Endothelial cell of umbilical vein (primary cell): ENCODE measurements at regions of chr1 and their contacts with region 1.

Region 1: DNA sequence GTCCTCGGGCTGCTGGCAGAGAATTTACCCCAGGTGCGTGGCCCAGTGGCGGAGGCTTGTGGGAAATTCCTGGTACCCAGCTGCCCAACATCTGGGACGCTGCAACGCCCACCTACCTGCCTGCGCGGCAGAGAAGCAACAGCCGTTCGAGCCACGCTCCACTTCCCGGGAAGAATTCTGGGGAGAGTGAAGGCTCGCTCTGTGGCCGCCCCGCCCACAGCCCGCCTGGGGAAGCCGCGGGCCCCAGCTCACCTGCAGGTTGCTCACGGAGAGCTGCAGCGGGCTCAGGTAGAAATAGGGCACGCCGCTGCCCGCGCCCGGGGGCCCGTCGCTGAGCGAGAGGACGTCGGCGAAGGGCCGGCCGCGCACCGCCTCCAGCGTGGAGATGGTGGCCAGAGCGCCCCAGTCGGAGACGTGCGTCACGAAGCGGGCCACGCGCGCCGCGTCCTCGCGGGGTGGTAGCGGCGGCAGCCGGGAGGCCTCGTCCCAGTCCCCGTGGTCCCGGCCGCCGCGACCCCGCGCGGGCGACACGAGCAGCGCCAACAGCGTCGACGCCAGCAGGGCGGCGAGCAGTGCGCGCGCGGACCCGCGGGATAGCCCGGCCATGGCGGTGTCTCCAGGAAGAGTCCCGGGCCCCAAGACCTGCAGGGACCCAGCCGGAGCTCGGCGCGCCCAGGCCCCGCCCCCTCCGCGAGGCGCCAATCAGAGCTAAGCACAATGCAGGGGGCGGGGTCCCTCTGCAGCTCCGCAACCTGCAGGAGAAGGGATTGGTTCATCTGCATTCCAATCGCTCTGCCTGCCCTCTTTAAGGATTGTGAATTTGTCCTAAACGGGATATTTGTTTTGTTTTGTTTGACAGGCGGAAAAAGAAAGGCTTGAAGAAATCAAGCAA is at the start of gene CREG1:
- DNase-seq: peak; percentile 91
- H3K4me3 ChIP-seq: peak within 1 kb of the TSS; percentile 42 to 60 (median 49)
- H3K27ac ChIP-seq: no peak within 1 kb of the TSS
- H3K4me1 ChIP-seq: peaks cover 5% of the 10 kb centered on the region
- H3K27me3 ChIP-seq: peaks cover 0 to 2% of the 10 kb centered on the region in 2 experiments
- CTCF ChIP-seq: no peak
- POLR2A ChIP-seq: peak; percentile 49
- total RNA-seq, gene CREG1: 12.1 and 15.8 TPM in 2 replicates

Region 2: GRCh38 chr1:167474191-167474716 is 79.1 kb before region 1 on chr1:
- CTCF ChIA-PET with region 1: no interaction called
- POLR2A ChIA-PET with region 1: no interaction called
- dilution Hi-C with region 1: no loop called
- intact Hi-C with region 1: no loop called
- DNase-seq: no peak
- H3K4me3 ChIP-seq: no peak overlapping the region
- H3K27ac ChIP-seq: no peak overlapping the region
- H3K4me1 ChIP-seq: no peaks in the 10 kb centered on the region
- H3K27me3 ChIP-seq: peaks cover 0 to 1% of the 10 kb centered on the region in 2 experiments
- CTCF ChIP-seq: no peak
- POLR2A ChIP-seq: no peak

Region 3: DNA sequence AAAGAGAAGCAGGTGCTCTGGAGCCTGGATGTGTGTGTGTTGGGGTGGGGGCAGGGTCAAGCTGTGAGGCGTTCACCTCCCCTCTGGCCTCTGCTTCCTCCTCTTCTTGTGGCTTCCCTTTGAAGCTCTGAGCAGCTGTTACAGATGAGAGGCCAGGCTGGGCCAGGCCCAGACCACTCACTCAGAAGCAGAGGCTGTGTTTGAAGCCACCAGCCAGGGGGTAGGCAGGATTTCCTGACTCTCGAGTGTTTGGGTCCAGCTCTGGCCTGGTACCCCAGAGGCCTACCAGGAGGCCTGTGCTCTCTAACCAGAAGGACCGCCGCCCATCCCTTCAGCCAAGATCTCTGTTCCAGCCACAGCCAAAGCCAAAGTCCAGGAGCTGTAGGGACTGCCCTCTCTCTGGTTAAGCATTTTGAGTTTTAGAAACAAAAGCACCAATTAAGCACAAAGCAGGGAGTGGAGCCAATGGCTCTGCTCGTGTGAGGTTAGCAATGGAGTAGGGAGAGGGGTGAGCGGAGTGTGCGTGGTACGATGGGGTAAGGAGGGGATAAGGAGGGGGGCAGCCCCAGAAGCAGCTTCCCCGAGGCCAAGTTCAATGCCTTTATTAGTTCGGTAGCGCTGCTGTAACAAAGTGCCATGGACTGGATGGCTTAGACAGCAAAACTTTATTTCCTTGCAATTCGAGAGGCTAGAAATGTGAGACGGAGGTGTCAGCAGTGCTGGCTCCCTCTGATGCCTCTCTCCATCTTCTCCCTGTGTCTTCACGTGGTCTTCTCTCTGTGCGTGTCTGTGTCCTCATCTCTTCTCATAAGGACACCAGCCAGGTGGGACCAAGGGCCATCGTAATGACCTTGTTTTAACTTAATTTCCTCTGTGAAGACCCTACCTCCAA is 97.1 kb after region 1 on chr1:
- CTCF ChIA-PET with region 1: no interaction called
- POLR2A ChIA-PET with region 1: no interaction called
- dilution Hi-C with region 1: no loop called
- intact Hi-C with region 1: no loop called
- DNase-seq: no peak
- H3K4me3 ChIP-seq: no peak overlapping the region
- H3K27ac ChIP-seq: no peak overlapping the region
- H3K4me1 ChIP-seq: peaks cover 13% of the 10 kb centered on the region
- H3K27me3 ChIP-seq: peaks cover 0 to 3% of the 10 kb centered on the region in 2 experiments
- CTCF ChIP-seq: no peak
- POLR2A ChIP-seq: no peak

Region 4: GRCh38 chr1:167964646-167965045 is 411.3 kb after region 1 on chr1:
- CTCF ChIA-PET with region 1: no interaction called
- POLR2A ChIA-PET with region 1: no interaction called
- dilution Hi-C with region 1: no loop called
- intact Hi-C with region 1: loop called (anchors 10 kb)
- DNase-seq: peak; percentile 71
- H3K4me3 ChIP-seq: no peak overlapping the region
- H3K27ac ChIP-seq: no peak overlapping the region
- H3K4me1 ChIP-seq: peaks cover 17% of the 10 kb centered on the region
- H3K27me3 ChIP-seq: no peaks in the 10 kb centered on the region
- CTCF ChIP-seq: no peak
- POLR2A ChIP-seq: no peak